ENCODE measurements at regions of chr10 and their contacts with region 1.

Region 1: DNA sequence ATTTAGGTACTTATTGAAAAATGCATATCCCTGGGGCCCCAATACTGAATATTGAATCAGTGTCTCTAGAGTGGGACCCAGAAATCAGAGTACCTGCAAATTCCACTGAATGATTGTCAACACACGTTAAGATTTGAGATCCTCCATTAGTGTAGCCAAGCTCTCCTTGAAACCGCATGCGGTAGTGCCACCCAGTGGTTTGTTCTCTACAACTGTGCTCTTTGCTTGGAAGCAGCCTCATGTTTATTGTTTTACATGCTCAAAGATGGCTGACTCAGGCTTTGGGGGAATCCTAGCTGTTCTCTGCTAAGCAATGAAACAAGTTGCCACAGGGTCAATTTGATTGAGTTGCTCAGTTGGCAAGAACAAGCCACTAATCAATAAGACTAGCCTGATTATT is 340.2 kb upstream of the CELF2 start:
- DNase-seq: peak; percentile 57 to 70
- ATAC-seq: peak; percentile 75 to 92 (median 84)
- H3K4me3 ChIP-seq: no peak overlapping the region
- H3K27ac ChIP-seq: no peak overlapping the region
- H3K4me1 ChIP-seq: no peaks in the 10 kb centered on the region
- H3K27me3 ChIP-seq: no peaks in the 10 kb centered on the region
- CTCF ChIP-seq: peak; percentile 22 to 81 (median 69)

Region 2: DNA sequence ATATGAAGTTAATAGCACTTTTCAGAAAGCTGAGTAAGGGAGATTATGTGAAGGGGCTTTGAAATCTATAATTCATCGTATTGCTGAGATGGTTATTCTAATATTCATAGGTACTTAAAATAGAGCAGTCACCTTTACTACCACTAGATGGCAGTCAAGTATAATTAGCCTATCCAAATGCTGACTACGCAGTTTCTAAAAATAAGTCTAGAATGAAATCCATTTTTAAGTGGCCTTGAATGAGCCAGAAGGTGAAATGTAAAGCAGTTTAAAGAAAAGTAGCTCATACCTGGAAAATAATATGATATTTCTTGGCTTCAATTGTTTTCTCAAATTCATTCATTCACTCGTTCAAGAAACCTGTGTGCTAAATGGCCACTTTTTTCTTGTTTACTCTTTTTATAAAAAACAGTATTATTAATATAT is 1345.9 kb before region 1 on chr10:
- intact Hi-C with region 1: loop called in 1 of 10 experiments (anchors 10 kb)
- DNase-seq: no peak
- ATAC-seq: peak in 4 of 8 donors; percentile 34 to 65 (median 52)
- H3K4me3 ChIP-seq: no peak overlapping the region
- H3K27ac ChIP-seq: no peak overlapping the region
- H3K4me1 ChIP-seq: peaks cover 0 to 6% (median 0%) of the 10 kb centered on the region in 9 donors
- H3K27me3 ChIP-seq: peaks cover 0 to 10% (median 3%) of the 10 kb centered on the region in 7 donors
- CTCF ChIP-seq: peak; percentile 64 to 87 (median 81)

Region 3: GRCh38 chr10:9342885-9343570 is 1334.5 kb before region 1 on chr10:
- intact Hi-C with region 1: loop called in 2 of 10 experiments (anchors 5 to 10 kb)
- DNase-seq: no peak
- ATAC-seq: peak in 2 of 8 donors; percentile 35 to 43
- H3K4me3 ChIP-seq: no peak overlapping the region
- H3K27ac ChIP-seq: no peak overlapping the region
- H3K4me1 ChIP-seq: no peaks in the 10 kb centered on the region
- H3K27me3 ChIP-seq: no peaks in the 10 kb centered on the region
- CTCF ChIP-seq: peak in 8 of 9 donors; percentile 21 to 75 (median 62)

Region 4: DNA sequence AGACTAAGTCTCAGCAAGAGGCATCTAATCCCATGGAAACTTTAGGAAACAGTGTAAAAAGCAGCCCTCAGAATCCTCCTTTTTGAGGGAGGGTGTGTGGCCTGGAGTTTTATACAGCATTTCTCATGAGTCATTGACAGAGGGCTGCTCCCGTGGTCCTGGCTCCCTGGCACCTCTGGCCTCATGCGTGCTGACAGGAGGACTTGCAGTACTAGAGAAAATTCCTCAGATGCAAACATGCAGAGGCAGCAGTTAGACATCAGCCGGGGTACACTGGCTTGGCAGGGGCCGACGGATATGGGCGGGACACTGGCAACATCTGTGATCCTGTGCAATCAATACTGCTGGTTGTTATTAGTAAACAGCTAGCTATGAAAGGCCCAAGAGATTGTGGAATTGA is 584.9 kb before region 1 on chr10:
- intact Hi-C with region 1: loop called in 1 of 10 experiments (anchors 10 kb)
- DNase-seq: peak in 1 of 2 donors; percentile 29
- ATAC-seq: peak in 4 of 8 donors; percentile 33 to 76 (median 46)
- H3K4me3 ChIP-seq: no peak overlapping the region
- H3K27ac ChIP-seq: no peak overlapping the region
- H3K4me1 ChIP-seq: peaks cover 0 to 6% (median 0%) of the 10 kb centered on the region in 9 donors
- H3K27me3 ChIP-seq: no peaks in the 10 kb centered on the region
- CTCF ChIP-seq: no peak

Region 5: DNA sequence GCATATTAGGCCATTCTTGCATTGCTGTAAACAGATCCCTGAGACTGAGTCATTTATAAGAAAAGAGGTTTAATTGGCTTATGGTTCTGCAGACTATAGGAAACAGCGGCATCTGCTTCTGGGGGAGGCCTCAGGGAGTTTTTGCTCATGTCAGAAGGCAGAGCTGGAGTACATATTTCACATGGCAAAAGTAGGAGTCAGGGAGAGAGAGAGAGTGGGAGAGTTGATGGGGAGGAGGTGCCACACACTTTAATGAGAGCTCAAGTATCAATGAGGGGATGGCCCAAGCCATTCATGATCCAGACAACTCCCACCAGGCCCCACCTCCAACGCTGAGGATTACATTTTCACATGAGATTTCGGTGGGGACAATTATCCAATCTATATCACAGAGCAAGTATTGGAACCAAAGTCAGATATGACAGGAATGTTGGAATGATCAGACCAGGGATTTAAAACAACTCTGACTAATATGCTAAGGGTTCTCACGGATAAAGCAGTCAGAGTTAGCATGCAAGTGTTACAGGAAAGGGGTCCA is 455.1 kb before region 1 on chr10:
- intact Hi-C with region 1: loop called in 2 of 10 experiments (anchors 10 kb)
- DNase-seq: no peak
- ATAC-seq: no peak
- H3K4me3 ChIP-seq: no peak overlapping the region
- H3K27ac ChIP-seq: no peak overlapping the region
- H3K4me1 ChIP-seq: no peaks in the 10 kb centered on the region
- H3K27me3 ChIP-seq: no peaks in the 10 kb centered on the region
- CTCF ChIP-seq: no peak

Region 6: GRCh38 chr10:10233229-10233628 is 444.2 kb before region 1 on chr10:
- intact Hi-C with region 1: loop called in 8 of 10 experiments (anchors 2 to 10 kb)
- DNase-seq: no peak
- ATAC-seq: no peak
- H3K4me3 ChIP-seq: no peak overlapping the region
- H3K27ac ChIP-seq: no peak overlapping the region
- H3K4me1 ChIP-seq: no peaks in the 10 kb centered on the region
- H3K27me3 ChIP-seq: no peaks in the 10 kb centered on the region
- CTCF ChIP-seq: peak in 6 of 9 donors; percentile 33 to 57 (median 45)

Region 7: DNA sequence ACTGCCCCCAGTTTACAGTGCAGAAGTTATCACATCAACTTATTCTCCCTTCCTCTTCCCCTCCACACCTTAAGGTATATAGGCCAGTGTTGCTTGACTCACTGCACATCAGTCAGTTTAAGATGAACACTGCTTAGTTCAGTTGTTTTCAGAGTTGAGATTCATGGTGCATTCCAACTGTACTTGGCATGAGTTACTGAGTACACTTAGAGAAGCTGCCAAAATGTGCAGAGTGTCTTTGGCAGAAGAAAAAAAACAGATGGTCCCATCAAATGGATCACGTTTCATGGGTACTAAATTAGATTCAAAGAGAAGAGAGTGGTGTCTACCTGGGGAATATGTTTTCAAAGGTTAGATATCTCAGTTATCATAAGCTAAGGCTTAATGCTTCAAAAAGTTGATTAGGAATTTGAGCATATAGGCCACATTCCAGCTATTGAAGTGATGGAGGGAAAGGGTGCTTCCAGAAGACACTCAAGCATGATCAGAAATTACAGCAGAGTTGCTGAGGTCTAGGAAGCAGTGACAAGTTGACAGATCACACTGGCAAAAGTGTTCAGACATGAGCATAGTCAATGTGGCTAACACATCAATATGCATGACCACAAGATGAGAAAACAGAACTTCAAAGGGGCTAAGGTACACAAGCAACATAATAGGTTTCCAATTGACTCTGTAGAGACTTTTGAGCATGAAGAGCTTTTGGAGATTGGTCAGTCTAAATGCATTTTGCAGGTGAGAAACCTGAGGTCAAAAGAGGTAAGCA is 239.0 kb before region 1 on chr10:
- intact Hi-C with region 1: loop called in 1 of 10 experiments (anchors 10 kb)
- DNase-seq: no peak
- ATAC-seq: peak in 5 of 8 donors; percentile 38 to 80 (median 49)
- H3K4me3 ChIP-seq: no peak overlapping the region
- H3K27ac ChIP-seq: no peak overlapping the region
- H3K4me1 ChIP-seq: peaks cover 0 to 5% (median 0%) of the 10 kb centered on the region in 9 donors
- H3K27me3 ChIP-seq: no peaks in the 10 kb centered on the region
- CTCF ChIP-seq: no peak

Measured in heart right ventricle (tissue), 16 donors.